Right cardiac atrium (tissue), 5 donors: ENCODE measurements at regions of chr12 and their contacts with region 1.

Region 1: GRCh38 chr12:26126340-26127284 is 1.8 kb upstream of the BHLHE41 start:
- DNase-seq: peak; percentile 88 to 96 (median 96)
- ATAC-seq: peak; percentile 90 to 91
- H3K4me3 ChIP-seq: peak overlapping the region; percentile 76
- H3K27ac ChIP-seq: peak overlapping the region; percentile 75
- H3K4me1 ChIP-seq: no peaks in the 10 kb centered on the region
- H3K27me3 ChIP-seq: no peaks in the 10 kb centered on the region

Region 2: GRCh38 chr12:25929142-25929541 is 197.5 kb before region 1 on chr12:
- intact Hi-C with region 1: no loop called
- DNase-seq: no peak
- ATAC-seq: peak in 1 of 2 donors; percentile 42
- H3K4me3 ChIP-seq: no peak overlapping the region
- H3K27ac ChIP-seq: no peak overlapping the region
- H3K4me1 ChIP-seq: no peaks in the 10 kb centered on the region
- H3K27me3 ChIP-seq: no peaks in the 10 kb centered on the region

Region 3: DNA sequence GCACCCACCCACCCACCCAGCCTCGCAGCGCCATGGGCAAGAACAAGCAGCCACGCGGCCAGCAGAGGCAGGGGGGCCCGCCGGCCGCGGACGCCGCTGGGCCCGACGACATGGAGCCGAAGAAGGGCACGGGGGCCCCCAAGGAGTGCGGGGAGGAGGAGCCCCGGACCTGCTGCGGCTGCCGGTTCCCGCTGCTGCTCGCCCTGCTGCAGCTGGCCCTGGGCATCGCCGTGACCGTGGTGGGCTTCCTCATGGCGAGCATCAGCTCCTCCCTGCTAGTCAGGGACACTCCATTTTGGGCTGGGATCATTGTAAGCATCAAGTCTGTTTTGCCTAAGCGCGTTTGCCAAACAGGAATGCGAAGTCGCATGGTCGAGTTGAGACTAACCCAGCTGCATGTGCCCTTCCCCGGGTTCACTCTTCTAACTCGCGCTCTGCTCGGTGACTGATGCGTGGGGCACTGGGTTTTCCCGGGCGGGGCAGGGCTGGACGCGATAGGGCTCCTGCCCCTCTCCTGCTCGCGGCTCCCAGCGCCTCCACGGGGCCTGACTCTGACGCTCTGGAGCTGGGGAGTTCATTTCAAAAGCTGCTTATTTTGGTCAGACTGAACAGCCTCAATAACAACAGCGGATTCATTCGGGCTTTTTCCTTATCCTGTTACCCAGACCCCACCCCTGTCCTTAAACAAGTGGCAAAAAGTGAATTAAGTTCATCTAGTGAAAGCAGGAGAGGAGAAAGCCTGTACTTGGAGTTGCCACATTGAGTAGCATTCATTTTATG is 69.2 kb after region 1 on chr12:
- intact Hi-C with region 1: loop called (anchors 2 to 10 kb)
- DNase-seq: peak; percentile 64 to 86 (median 83)
- ATAC-seq: peak; percentile 86 to 88
- H3K4me3 ChIP-seq: peak overlapping the region; percentile 63
- H3K27ac ChIP-seq: peak overlapping the region; percentile 61
- H3K4me1 ChIP-seq: peaks cover 2% of the 10 kb centered on the region
- H3K27me3 ChIP-seq: no peaks in the 10 kb centered on the region

Region 4: DNA sequence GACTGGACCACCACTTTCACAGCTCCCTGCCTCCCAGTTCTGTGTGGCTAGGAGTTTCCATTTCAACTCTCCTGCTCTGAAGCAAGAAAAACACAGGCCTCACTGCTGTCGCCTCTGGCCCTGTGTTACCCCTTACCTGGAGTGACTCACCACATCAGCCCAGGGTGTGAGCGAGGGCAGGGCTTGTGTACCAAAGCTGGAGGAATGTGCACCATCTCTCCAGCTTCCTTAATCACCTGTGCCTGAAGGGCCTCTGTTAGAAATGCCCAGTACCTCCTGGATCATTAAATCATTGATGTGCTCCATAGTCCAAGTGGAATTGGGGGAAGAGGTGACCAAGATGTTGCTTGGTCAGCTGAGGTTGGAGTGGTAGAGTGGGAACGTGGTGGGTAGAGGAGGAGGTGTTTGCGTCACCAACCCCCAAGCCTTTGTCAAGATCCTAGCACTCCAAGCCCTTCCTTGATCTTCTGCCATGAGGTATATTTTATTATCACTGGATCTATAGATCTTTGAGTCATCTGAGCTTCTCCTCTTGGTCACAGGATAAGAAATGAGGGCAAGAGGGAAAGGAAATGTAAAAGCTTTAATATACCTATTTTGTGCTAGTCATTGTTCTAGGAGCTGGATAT is 120.0 kb after region 1 on chr12:
- intact Hi-C with region 1: no loop called
- DNase-seq: no peak
- ATAC-seq: no peak
- H3K4me3 ChIP-seq: no peak overlapping the region
- H3K27ac ChIP-seq: no peak overlapping the region
- H3K4me1 ChIP-seq: no peaks in the 10 kb centered on the region
- H3K27me3 ChIP-seq: no peaks in the 10 kb centered on the region

Region 5: GRCh38 chr12:26274441-26275312 is 148.1 kb after region 1 on chr12:
- intact Hi-C with region 1: loop called in 1 of 4 experiments (anchors 10 kb)
- DNase-seq: peak; percentile 89 to 92 (median 91)
- ATAC-seq: peak; percentile 97 to 98
- H3K4me3 ChIP-seq: no peak overlapping the region
- H3K27ac ChIP-seq: peak overlapping the region; percentile 83
- H3K4me1 ChIP-seq: peaks cover 12% of the 10 kb centered on the region
- H3K27me3 ChIP-seq: no peaks in the 10 kb centered on the region

Region 6: GRCh38 chr12:26287671-26288381 is 161.2 kb after region 1 on chr12:
- intact Hi-C with region 1: loop called in 1 of 4 experiments (anchors 10 kb)
- DNase-seq: peak; percentile 44 to 71 (median 67)
- ATAC-seq: peak; percentile 73 to 81
- H3K4me3 ChIP-seq: no peak overlapping the region
- H3K27ac ChIP-seq: peak overlapping the region; percentile 69
- H3K4me1 ChIP-seq: peaks cover 7% of the 10 kb centered on the region
- H3K27me3 ChIP-seq: no peaks in the 10 kb centered on the region